Naive thymus-derived CD8-positive, alpha-beta T cell (primary cell): ENCODE measurements at regions of chr3 and their contacts with region 1.

Region 1: DNA sequence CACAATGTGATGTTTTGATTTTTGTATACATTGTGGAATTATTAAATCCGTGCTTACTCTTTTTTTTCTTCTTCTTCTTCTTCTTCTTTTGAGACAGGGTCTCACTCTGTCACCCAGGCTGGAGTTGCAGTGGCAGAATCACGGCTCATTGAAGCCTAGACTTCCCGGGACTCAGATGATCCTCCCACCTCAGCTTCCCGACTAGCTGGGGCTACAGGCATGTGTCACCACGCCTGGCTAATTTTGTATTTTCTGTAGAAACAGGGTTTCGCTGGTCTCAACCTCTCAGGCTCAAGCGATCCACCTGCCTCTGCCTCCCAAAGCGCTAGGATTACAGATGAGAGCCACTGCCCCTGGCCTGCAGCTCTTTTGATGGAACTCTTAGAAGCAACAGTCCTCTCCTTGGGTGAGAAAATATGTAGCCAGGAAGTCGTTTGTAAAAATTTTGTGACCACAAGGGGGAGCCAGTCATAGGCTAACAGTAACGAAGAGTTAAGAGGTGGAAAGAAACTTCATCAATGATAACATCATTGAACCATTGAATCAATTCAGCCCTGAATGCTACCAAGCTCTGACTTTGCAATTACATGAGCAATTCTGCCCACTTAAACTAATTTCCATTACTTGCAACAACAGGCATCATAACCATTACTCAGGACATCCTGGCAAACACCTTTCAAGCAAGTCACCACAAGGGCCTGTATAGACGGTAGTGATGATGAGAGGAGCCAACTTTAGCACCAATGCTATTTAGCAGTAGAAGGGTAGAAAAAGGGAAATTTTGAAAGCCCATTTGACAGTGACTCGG is 16.7 kb upstream of the CMTM7 start:
- DNase-seq: peak; percentile 14 to 87 (median 74)
- ATAC-seq: peak; percentile 26 to 43
- H3K4me3 Mint-ChIP-seq: peak overlapping the region in 2 of 10 donors; percentile 34 to 54
- H3K27ac Mint-ChIP-seq: peak overlapping the region; percentile 1 to 96 (median 86)
- H3K4me1 Mint-ChIP-seq: peaks cover 11 to 44% (median 40%) of the 10 kb centered on the region in 4 donors
- H3K27me3 Mint-ChIP-seq: no peaks in the 10 kb centered on the region

Region 2: GRCh38 chr3:32313723-32314473 is 61.1 kb before region 1 on chr3:
- POLR2A ChIA-PET with region 1: no interaction called
- DNase-seq: no peak
- ATAC-seq: peak; percentile 50 to 58
- H3K4me3 Mint-ChIP-seq: peak overlapping the region in 6 of 10 donors; percentile 2 to 57 (median 13)
- H3K27ac Mint-ChIP-seq: peak overlapping the region in 9 of 10 donors; percentile 31 to 95 (median 74)
- H3K4me1 Mint-ChIP-seq: peaks cover 16 to 25% (median 19%) of the 10 kb centered on the region in 4 donors
- H3K27me3 Mint-ChIP-seq: no peaks in the 10 kb centered on the region

Region 3: GRCh38 chr3:32391643-32392535 is 16.9 kb after region 1 on chr3 and contains the start of gene CMTM7:
- POLR2A ChIA-PET with region 1: interaction called, 33 read pairs
- DNase-seq: peak; percentile 24 to 79 (median 54)
- ATAC-seq: peak; percentile 57 to 68
- H3K4me3 Mint-ChIP-seq: peak within 1 kb of the TSS; percentile 90 to 99 (median 96)
- H3K27ac Mint-ChIP-seq: peak within 1 kb of the TSS; percentile 96 to 100 (median 98)
- H3K4me1 Mint-ChIP-seq: peaks cover 33 to 76% (median 61%) of the 10 kb centered on the region in 4 donors
- H3K27me3 Mint-ChIP-seq: no peaks in the 10 kb centered on the region
- polyA plus RNA-seq, gene CMTM7: 67.4 to 122 (median 98.5) TPM

Region 4: DNA sequence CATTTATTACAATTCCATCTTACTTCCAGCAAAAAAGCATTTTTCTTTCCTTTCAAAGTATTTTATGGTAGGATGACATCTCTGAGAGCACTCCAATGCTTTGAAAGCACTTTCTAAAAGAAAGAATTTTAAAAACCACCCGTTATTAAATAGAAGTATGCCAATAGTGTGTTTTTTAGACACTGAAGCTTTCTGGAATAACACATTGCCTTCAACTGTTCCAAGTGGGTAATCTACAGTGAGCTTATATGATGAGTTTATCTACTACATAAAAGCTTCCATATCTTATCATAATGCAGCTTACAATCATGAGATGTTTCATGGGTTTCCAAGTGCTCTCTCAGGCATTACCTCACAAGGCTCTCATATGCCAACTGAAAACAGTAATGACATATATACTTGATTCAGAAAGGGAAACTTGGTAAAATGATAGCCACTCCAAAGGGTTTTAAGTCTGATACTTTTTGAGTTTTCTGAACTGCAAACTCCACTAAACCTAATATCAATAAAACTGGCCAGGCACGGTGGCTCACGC is 113.5 kb after region 1 on chr3:
- POLR2A ChIA-PET with region 1: no interaction called
- DNase-seq: no peak
- ATAC-seq: no peak
- H3K4me3 Mint-ChIP-seq: no peak overlapping the region
- H3K27ac Mint-ChIP-seq: peak overlapping the region in 1 of 10 donors; percentile 56
- H3K4me1 Mint-ChIP-seq: peaks cover 7 to 28% (median 13%) of the 10 kb centered on the region in 4 donors
- H3K27me3 Mint-ChIP-seq: no peaks in the 10 kb centered on the region